Activated B cell treated with CpG ODN at 0.5 μM for 24 hours (primary cell): ENCODE measurements at regions of chr6 and their contacts with region 1.

Region 1: GRCh38 chr6:11374036-11375010 is 141.9 kb upstream of the NEDD9 start:
- DNase-seq: no peak
- ATAC-seq: peak; percentile 93
- H3K4me3 Mint-ChIP-seq: peak overlapping the region; percentile 53
- H3K27ac Mint-ChIP-seq: peak overlapping the region; percentile 77
- H3K4me1 Mint-ChIP-seq: peaks cover 90% of the 10 kb centered on the region
- H3K27me3 Mint-ChIP-seq: no peaks in the 10 kb centered on the region
- CTCF ChIP-seq: no peak

Region 2: DNA sequence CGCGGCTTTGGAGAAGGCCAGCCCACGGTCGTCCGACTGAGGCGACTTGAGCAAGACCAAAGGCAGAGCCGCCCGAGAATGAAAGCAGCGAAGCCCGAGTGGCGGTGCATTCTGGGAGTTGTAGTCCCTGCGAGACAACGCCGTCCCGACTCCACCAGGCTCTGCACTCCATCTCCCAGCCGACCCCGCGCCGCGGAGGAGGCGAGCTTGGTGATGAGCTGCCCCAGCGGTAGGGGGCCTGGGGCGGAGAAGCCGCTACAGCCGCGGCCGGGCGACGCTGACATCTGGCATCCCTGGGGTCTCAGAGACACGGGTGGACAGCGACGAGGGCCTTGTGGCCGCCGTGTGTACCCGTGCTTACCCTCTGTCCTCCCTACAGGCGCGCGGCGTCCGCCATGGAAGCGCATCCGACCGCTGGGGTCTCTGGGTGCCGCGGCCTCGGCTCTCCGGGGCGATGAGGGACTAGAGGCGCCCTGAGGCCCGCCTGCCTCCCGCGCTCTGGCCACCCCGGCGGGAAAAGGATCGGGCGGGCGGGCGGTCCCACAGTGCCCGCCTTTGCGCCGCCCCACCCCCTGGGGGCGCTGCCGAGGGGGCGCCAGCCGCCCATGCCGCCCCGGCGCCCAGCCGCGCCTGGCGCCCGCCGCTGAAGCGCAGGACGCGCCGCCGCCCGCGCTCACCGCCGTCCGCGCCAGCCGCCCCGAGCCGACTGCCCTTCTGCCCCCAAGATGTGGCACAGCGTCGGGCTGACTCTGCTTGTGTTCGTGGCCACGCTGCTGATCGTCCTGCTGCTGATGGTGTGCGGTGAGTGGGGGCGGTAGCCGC is 280.5 kb before region 1 on chr6 and contains the start of gene SMIM13:
- CTCF ChIA-PET with region 1: no interaction called
- POLR2A ChIA-PET with region 1: no interaction called
- intact Hi-C with region 1: loop called (anchors 5 kb)
- DNase-seq: peak; percentile 90
- ATAC-seq: peak; percentile 90
- H3K4me3 Mint-ChIP-seq: peak within 1 kb of the TSS; percentile 96
- H3K27ac Mint-ChIP-seq: peak within 1 kb of the TSS; percentile 98
- H3K4me1 Mint-ChIP-seq: peaks cover 20% of the 10 kb centered on the region
- H3K27me3 Mint-ChIP-seq: peaks cover 3% of the 10 kb centered on the region
- CTCF ChIP-seq: no peak
- total RNA-seq, gene SMIM13: 5.8 and 5.9 TPM in 2 replicates

Region 3: DNA sequence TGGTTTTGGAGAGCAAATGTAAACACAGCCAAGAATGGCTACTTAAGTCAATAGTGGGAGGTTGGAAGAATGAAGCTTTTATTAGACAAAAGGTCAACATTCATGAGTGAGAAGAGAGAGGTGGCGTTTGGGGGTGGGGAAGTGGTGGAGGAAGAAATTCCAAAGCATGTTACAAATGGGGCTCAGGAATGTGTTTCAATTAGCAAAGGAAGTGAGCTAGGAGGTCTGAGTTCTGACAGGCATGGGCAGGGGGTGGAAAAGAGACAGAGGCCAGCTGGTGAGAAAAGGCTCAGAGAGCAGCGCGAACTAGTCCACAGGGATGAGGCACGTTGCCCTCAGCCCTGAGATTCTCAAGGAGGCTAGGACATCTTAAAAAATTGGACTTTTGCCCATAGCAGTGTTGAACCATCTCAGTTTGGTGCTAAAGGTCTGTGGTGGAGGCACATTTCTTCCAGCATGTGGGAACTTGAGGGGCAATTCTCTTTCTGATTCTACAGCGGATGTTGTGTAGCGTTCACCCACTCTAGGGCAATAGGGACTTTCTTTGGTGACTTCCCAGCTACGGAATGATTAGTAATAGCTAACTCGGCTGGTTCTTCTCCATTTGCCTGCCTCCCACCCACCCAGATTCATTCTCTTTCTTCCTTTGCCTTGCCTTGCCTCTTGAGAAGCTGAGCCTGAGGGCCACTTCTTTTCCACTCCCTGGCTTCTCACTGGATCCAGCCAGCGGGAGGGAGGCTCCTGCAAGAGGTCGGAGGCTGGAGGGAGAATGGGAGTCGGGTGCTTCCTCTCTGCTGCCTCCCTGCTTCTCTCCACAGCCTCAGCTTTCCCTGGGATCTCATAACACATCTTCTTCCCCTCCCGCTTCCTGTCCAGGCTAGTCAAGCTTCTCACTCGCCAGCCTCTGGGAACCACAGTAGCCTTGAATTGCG is 96.8 kb before region 1 on chr6:
- CTCF ChIA-PET with region 1: no interaction called
- POLR2A ChIA-PET with region 1: interaction called, 4 read pairs
- intact Hi-C with region 1: loop called (anchors 2 kb)
- DNase-seq: no peak
- ATAC-seq: peak; percentile 69
- H3K4me3 Mint-ChIP-seq: peak overlapping the region; percentile 59
- H3K27ac Mint-ChIP-seq: peak overlapping the region; percentile 91
- H3K4me1 Mint-ChIP-seq: peaks cover 48% of the 10 kb centered on the region
- H3K27me3 Mint-ChIP-seq: no peaks in the 10 kb centered on the region
- CTCF ChIP-seq: no peak

Region 4: GRCh38 chr6:11330413-11330760 is 43.9 kb before region 1 on chr6:
- CTCF ChIA-PET with region 1: no interaction called
- POLR2A ChIA-PET with region 1: interaction called, 3 read pairs
- intact Hi-C with region 1: loop called (anchors 2 kb)
- DNase-seq: no peak
- ATAC-seq: no peak
- H3K4me3 Mint-ChIP-seq: peak overlapping the region; percentile 21
- H3K27ac Mint-ChIP-seq: peak overlapping the region; percentile 64
- H3K4me1 Mint-ChIP-seq: peaks cover 74% of the 10 kb centered on the region
- H3K27me3 Mint-ChIP-seq: no peaks in the 10 kb centered on the region
- CTCF ChIP-seq: no peak

Region 5: DNA sequence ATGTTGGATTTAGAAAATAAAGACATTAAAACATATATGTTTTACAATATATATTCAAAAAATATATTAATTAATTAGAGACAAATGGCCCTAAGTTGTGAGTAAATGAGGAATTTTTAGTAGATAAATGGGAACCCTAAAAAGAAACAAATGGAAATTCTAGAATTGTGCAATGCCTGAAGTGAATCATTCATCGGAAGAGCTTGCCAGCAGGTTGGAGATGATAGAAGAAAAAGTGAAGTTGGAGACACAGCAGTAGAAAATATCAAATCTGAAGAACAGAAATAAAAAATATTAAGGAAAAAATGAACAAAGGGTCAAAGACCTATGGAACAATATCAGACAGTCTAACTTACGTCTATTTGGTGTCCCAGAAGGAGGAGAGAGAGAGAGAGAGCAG is 32.5 kb before region 1 on chr6:
- CTCF ChIA-PET with region 1: no interaction called
- POLR2A ChIA-PET with region 1: no interaction called
- intact Hi-C with region 1: no loop called
- DNase-seq: no peak
- ATAC-seq: no peak
- H3K4me3 Mint-ChIP-seq: no peak overlapping the region
- H3K27ac Mint-ChIP-seq: peak overlapping the region; percentile 36
- H3K4me1 Mint-ChIP-seq: peaks cover 63% of the 10 kb centered on the region
- H3K27me3 Mint-ChIP-seq: no peaks in the 10 kb centered on the region
- CTCF ChIP-seq: no peak

Region 6: DNA sequence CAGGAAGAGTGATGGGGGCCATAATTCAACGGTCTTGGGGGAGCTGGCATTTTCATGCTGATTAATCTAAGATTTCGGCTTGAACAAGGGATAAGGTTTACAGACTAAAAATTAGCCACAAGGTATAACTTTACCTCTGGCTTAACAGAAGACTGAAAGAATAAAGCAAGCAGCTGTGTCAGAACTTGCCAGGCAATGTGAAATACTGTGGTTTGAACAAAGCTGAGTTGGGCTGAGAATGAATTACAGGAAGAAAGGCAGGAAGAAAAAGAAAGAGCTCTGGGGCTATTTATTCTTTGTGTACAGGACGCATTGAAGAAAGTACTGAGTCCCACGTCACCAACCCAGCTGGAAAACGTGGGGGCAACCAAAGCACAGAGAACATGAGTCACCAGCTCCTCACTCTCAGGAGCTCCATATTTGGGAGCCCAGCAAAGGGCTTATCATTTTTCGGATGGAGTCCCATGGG is 20.4 kb before region 1 on chr6:
- CTCF ChIA-PET with region 1: no interaction called
- POLR2A ChIA-PET with region 1: no interaction called
- intact Hi-C with region 1: loop called (anchors 1 kb)
- DNase-seq: no peak
- ATAC-seq: peak; percentile 66
- H3K4me3 Mint-ChIP-seq: peak overlapping the region; percentile 32
- H3K27ac Mint-ChIP-seq: peak overlapping the region; percentile 86
- H3K4me1 Mint-ChIP-seq: peaks cover 86% of the 10 kb centered on the region
- H3K27me3 Mint-ChIP-seq: no peaks in the 10 kb centered on the region
- CTCF ChIP-seq: no peak

Region 7: GRCh38 chr6:11404838-11405237 is 30.5 kb after region 1 on chr6:
- CTCF ChIA-PET with region 1: no interaction called
- POLR2A ChIA-PET with region 1: interaction called, 6 read pairs
- intact Hi-C with region 1: loop called (anchors 1 kb)
- DNase-seq: no peak
- ATAC-seq: peak; percentile 47
- H3K4me3 Mint-ChIP-seq: peak overlapping the region; percentile 39
- H3K27ac Mint-ChIP-seq: peak overlapping the region; percentile 79
- H3K4me1 Mint-ChIP-seq: peaks cover 55% of the 10 kb centered on the region
- H3K27me3 Mint-ChIP-seq: no peaks in the 10 kb centered on the region
- CTCF ChIP-seq: no peak

Region 8: GRCh38 chr6:11460001-11460668 is 85.8 kb after region 1 on chr6:
- CTCF ChIA-PET with region 1: no interaction called
- POLR2A ChIA-PET with region 1: interaction called, 12 read pairs
- intact Hi-C with region 1: loop called (anchors 1 kb)
- DNase-seq: peak; percentile 22
- ATAC-seq: peak; percentile 18
- H3K4me3 Mint-ChIP-seq: peak overlapping the region; percentile 80
- H3K27ac Mint-ChIP-seq: peak overlapping the region; percentile 96
- H3K4me1 Mint-ChIP-seq: peaks cover 78% of the 10 kb centered on the region
- H3K27me3 Mint-ChIP-seq: no peaks in the 10 kb centered on the region
- CTCF ChIP-seq: no peak